BJ (cell line): ENCODE measurements at regions of chr14 and their contacts with region 1.

Region 1: GRCh38 chr14:100108042-100108825 is 43.0 kb downstream of the EVL start:
- DNase-seq: no peak
- H3K4me3 ChIP-seq: no peak overlapping the region
- H3K27me3 ChIP-seq: no peaks in the 10 kb centered on the region
- CTCF ChIP-seq: peak; percentile 96

Region 2: GRCh38 chr14:99976666-99977065 is 131.6 kb before region 1 on chr14:
- CTCF ChIA-PET with region 1: interaction called, 114 read pairs
- POLR2A ChIA-PET with region 1: no interaction called
- DNase-seq: no peak
- H3K4me3 ChIP-seq: no peak overlapping the region
- H3K27me3 ChIP-seq: no peaks in the 10 kb centered on the region
- CTCF ChIP-seq: no peak

Region 3: DNA sequence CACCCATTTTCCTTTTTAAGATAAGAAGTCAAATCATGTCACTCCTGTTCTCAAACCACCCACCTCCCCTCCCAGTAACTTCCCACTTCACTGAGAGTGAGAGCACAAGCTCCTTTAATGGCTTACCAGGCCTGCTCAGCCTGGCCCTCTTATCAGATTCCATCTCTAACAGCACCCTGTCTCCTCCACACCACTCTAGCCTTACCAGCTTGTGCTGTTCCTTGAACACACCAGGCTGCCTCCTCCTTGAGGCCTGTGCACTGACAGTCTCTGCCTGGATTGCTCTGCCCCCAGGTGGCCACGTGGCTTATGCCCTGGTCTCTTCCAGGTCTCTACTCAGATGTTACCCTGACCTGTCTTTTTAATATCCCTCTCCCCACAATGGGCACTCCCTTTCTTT is 83.1 kb before region 1 on chr14:
- CTCF ChIA-PET with region 1: interaction called, 16 read pairs
- POLR2A ChIA-PET with region 1: no interaction called
- DNase-seq: no peak
- H3K4me3 ChIP-seq: no peak overlapping the region
- H3K27me3 ChIP-seq: no peaks in the 10 kb centered on the region
- CTCF ChIP-seq: peak; percentile 50

Region 4: DNA sequence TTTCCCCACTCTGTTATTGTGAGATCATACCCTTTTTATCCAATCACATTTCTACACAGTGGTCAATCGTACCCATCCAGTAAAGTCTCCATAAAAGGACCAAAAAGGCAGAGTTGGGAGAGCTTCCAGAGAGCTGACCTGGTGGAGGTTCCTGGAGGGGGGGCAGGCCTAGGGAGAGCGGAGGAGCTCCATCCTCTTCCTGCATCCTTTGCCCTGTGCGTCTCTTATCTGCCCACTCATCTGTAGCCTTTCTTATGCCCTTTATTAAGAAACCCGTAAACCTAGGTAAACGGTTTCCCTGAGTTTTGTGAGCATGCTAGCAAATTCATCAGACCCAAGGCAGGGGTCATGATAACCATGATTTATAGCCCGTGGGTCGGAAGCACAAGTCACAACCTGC is 16.8 kb before region 1 on chr14:
- CTCF ChIA-PET with region 1: interaction called, 22 read pairs
- POLR2A ChIA-PET with region 1: no interaction called
- DNase-seq: no peak
- H3K4me3 ChIP-seq: no peak overlapping the region
- H3K27me3 ChIP-seq: no peaks in the 10 kb centered on the region
- CTCF ChIP-seq: no peak

Region 5: GRCh38 chr14:100122481-100123222 is 14.4 kb after region 1 on chr14:
- CTCF ChIA-PET with region 1: interaction called, 29 read pairs
- POLR2A ChIA-PET with region 1: no interaction called
- DNase-seq: no peak
- H3K4me3 ChIP-seq: no peak overlapping the region
- H3K27me3 ChIP-seq: no peaks in the 10 kb centered on the region
- CTCF ChIP-seq: no peak

Region 6: DNA sequence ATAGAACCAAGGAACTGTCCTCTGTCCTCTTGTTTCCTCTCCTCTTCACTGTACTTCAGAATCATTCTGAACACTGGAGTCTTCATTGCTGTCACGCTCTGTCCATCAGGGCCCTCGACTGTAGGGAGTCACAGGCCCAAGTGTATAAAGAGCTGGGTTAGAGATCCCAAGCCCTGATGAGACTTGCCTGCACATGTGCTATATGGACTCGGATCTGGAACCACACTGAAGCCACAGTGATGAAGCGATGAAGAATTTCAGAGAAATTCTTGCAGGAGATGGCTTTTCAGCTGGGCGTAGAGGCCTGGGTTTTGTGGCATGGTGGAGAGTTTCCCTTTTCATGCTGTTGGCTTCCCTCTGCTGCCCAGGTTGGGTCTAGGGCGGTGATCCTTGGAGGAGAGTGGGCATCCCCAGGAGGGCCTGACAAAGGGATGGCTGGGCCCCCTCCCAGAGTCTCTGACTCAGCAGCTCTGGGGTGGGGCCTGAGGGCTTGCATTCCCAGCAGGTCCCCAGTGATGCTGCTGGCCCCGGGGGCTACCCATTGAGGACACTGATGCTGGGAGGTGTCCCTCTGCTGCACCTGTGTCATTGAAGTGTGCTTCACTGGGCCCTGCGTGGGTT is 91.1 kb after region 1 on chr14:
- CTCF ChIA-PET with region 1: no interaction called
- POLR2A ChIA-PET with region 1: no interaction called
- DNase-seq: no peak
- H3K4me3 ChIP-seq: no peak overlapping the region
- H3K27me3 ChIP-seq: no peaks in the 10 kb centered on the region; the same call in 1 of the 2 replicates
- CTCF ChIP-seq: no peak